Right cardiac atrium (tissue), 5 donors: ENCODE measurements at regions of chr5 and their contacts with region 1.

Region 1: GRCh38 chr5:14142827-14143548 is at the start of gene TRIO:
- DNase-seq: peak; percentile 90 to 96 (median 96)
- ATAC-seq: peak; percentile 90 to 93
- H3K4me3 ChIP-seq: peak within 1 kb of the TSS; percentile 69
- H3K27ac ChIP-seq: peak within 1 kb of the TSS; percentile 67
- H3K4me1 ChIP-seq: peaks cover 7% of the 10 kb centered on the region
- H3K27me3 ChIP-seq: no peaks in the 10 kb centered on the region
- total RNA-seq, gene TRIO: 46.6 to 66.0 (median 55.5) TPM

Region 2: DNA sequence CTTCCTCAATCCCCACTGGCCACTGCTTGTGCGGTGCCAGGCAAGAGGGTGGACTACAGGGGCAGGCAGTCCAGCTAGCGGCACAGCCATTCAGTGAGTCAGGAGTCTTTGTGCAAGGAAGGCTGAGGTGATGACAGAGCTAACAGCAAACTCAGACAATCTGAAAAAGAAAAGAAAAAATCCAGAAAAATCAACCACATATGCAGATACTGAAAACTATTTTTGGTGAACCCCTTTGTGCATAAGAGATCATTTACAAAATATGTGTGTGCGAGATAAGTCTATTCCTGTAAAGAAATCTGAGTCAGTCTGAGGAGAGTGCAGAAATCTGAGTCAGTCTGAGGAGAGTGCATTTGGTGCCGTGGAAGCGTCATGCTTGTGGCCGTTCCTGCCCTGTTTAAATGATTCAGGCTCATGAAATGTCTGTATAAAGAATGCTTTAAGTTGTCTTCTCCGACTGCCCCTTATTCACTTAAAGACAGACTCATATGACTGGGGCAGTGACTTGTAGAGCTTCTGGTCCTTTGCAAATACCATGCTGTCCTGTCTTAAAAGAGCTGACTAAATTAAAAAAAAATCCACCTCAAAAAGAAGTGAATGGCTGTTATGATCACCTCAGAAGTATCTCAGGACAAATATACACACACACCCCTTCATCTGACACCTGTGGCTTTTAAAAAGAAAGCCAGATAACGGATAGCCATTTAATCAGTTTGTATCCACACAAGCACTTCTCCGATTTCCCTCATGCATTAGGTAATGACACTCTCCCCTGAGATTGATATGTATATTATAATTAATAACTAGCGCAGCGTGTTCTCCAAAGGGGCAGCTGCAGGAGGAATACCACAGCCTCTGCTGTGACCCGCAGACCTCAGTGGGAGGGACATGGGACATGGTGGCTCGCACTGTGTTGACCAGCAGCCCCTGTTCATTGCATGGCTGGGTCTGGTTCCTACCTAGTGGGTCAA is 47.5 kb after region 1 on chr5:
- intact Hi-C with region 1: loop called in 2 of 4 experiments (anchors 10 kb)
- DNase-seq: peak in 2 of 3 donors; percentile 51 to 69
- ATAC-seq: peak; percentile 74 to 90
- H3K4me3 ChIP-seq: no peak overlapping the region
- H3K27ac ChIP-seq: peak overlapping the region; percentile 85
- H3K4me1 ChIP-seq: peaks cover 11% of the 10 kb centered on the region
- H3K27me3 ChIP-seq: no peaks in the 10 kb centered on the region

Region 3: DNA sequence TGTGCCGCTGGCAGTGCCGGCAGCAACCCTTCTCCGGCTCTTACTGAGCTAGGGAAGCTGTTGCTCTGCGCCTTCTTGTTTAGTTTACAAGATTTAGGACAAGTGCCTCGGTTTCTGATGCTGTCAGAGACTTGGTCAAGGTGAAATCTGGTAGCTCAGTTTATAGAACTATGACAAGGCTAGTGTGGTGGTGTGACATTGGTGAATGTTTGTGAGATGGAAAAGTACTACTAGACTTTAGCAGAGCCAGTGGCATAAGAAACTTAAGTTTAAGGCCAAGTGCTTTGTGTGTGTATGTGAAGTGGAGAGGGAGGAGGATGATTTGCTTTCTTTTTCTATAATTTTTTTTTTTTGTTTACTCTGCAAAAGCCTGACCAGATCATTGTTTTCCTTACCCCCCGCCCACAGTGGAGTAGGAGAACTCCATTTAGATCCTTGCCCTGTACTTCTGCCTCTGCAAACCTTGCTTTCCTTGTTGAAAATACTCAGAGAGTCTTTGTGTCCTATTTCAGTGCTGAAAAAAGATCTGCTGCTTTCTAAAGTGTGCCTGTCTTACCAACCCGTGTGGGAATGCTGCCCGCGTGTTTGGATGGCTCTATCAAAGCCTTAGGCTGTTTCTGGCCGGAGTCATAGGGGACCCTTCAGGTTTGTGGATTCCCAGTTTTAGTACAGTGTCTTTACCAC is 76.1 kb after region 1 on chr5:
- intact Hi-C with region 1: no loop called
- DNase-seq: no peak
- ATAC-seq: peak; percentile 44 to 47
- H3K4me3 ChIP-seq: no peak overlapping the region
- H3K27ac ChIP-seq: peak overlapping the region; percentile 9
- H3K4me1 ChIP-seq: peaks cover 30% of the 10 kb centered on the region
- H3K27me3 ChIP-seq: no peaks in the 10 kb centered on the region

Region 4: GRCh38 chr5:14250084-14250695 is 107.2 kb after region 1 on chr5:
- intact Hi-C with region 1: loop called in 1 of 4 experiments (anchors 10 kb)
- DNase-seq: peak; percentile 69 to 85 (median 79)
- ATAC-seq: peak; percentile 80 to 90
- H3K4me3 ChIP-seq: no peak overlapping the region
- H3K27ac ChIP-seq: peak overlapping the region; percentile 37
- H3K4me1 ChIP-seq: peaks cover 17% of the 10 kb centered on the region
- H3K27me3 ChIP-seq: no peaks in the 10 kb centered on the region

Region 5: DNA sequence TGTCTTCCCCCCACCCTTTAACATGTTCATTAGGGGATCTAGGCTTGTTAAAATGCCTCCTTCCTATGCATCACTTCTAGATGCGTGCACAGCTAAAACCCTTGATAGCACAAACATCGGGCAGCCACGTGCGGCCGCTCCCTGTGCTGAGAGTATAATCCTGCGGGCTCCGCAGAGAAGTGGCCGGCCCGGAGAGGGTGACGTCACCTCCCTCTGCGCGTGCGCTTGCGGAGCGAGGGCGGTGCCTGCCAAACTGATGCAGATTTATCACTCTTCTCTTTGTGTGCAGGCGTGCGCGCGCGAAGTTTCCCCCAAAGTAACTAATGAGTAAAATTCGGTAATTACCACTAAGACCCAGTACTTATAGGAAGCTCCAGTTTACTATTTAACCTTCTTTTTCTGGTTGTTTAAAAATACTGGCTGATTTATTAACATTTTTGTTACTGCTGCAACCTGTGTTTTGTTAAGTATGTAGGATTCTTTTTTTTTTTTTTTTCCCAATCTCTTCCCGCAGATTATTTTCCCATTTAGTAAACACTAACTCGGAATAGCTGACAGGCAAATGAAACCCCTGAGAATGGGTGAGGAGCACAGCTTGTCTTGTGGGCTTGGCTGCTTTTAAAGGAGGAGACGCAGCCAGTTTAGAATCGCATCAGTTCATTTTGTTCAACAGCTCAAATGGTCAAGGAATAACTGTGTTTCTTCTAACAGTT is 121.8 kb after region 1 on chr5:
- intact Hi-C with region 1: loop called (anchors 5 to 10 kb)
- DNase-seq: peak; percentile 92 to 97 (median 96)
- ATAC-seq: peak; percentile 97
- H3K4me3 ChIP-seq: peak overlapping the region; percentile 23
- H3K27ac ChIP-seq: no peak overlapping the region
- H3K4me1 ChIP-seq: peaks cover 18% of the 10 kb centered on the region
- H3K27me3 ChIP-seq: no peaks in the 10 kb centered on the region